ENCODE measurements at regions of chr12 and their contacts with region 1.

Region 1: DNA sequence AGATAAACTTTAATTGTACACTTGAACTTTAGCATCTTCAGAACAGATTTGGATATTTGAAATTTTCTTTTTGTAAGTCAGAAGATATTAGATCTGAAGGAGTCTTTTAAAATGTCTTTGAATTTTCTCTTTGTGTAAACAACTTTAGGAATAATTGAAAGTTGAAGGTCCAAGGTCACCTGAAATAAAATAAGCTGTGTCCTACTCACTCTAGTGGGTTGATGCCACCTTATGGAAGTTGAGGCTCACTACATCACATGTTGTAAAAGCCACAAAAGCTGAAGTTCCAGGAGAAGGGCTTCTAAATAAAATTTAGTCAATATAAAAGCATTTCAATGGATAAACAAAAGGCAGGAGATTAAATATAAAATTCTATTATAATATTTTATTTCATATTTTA is 122.0 kb upstream of the ATXN7L3B start:
- DNase-seq: peak; percentile 46
- H3K4me3 Mint-ChIP-seq: no peak overlapping the region
- H3K27ac Mint-ChIP-seq: no peak overlapping the region
- H3K4me1 Mint-ChIP-seq: peaks cover 7% of the 10 kb centered on the region
- H3K27me3 Mint-ChIP-seq: no peaks in the 10 kb centered on the region
- CTCF ChIP-seq: peak; percentile 54

Region 2: GRCh38 chr12:73935817-73936216 is 479.8 kb before region 1 on chr12:
- CTCF ChIA-PET with region 1: interaction called, 13 read pairs
- POLR2A ChIA-PET with region 1: no interaction called
- intact Hi-C with region 1: loop called (anchors 1 kb)
- DNase-seq: peak; percentile 32
- H3K4me3 Mint-ChIP-seq: no peak overlapping the region
- H3K27ac Mint-ChIP-seq: no peak overlapping the region
- H3K4me1 Mint-ChIP-seq: no peaks in the 10 kb centered on the region
- H3K27me3 Mint-ChIP-seq: no peaks in the 10 kb centered on the region
- CTCF ChIP-seq: peak; percentile 41

Region 3: GRCh38 chr12:74111688-74112360 is 303.8 kb before region 1 on chr12:
- CTCF ChIA-PET with region 1: interaction called, 3 read pairs
- POLR2A ChIA-PET with region 1: no interaction called
- intact Hi-C with region 1: loop called (anchors 1 kb)
- DNase-seq: peak; percentile 63
- H3K4me3 Mint-ChIP-seq: no peak overlapping the region
- H3K27ac Mint-ChIP-seq: no peak overlapping the region
- H3K4me1 Mint-ChIP-seq: peaks cover 7% of the 10 kb centered on the region
- H3K27me3 Mint-ChIP-seq: no peaks in the 10 kb centered on the region
- CTCF ChIP-seq: peak; percentile 37

Region 4: GRCh38 chr12:74401035-74401434 is 14.6 kb before region 1 on chr12:
- CTCF ChIA-PET with region 1: interaction called, 10 read pairs
- POLR2A ChIA-PET with region 1: no interaction called
- intact Hi-C with region 1: no loop called
- DNase-seq: no peak
- H3K4me3 Mint-ChIP-seq: no peak overlapping the region
- H3K27ac Mint-ChIP-seq: no peak overlapping the region
- H3K4me1 Mint-ChIP-seq: no peaks in the 10 kb centered on the region
- H3K27me3 Mint-ChIP-seq: no peaks in the 10 kb centered on the region
- CTCF ChIP-seq: no peak

Region 5: DNA sequence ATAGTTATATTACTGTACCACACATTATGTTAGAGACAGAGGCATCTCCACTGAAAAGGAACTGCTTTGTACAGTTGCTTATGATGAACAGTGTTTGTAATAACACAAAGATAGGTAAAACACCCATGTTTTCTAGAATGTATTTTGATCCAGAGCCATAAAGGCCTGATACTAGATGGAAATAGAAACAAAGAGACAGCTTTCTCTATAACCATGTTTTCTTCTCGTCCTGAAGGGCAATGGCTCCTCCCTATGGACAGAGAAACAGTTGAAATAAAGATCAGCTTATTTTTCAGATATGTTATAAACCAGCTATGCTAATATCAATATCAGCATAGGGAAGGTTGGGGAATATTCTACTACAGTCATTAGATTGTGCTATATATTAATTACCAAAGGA is 231.2 kb after region 1 on chr12:
- CTCF ChIA-PET with region 1: interaction called, 7 read pairs
- POLR2A ChIA-PET with region 1: no interaction called
- intact Hi-C with region 1: loop called (anchors 2 kb)
- DNase-seq: peak; percentile 51
- H3K4me3 Mint-ChIP-seq: no peak overlapping the region
- H3K27ac Mint-ChIP-seq: no peak overlapping the region
- H3K4me1 Mint-ChIP-seq: no peaks in the 10 kb centered on the region
- H3K27me3 Mint-ChIP-seq: no peaks in the 10 kb centered on the region
- CTCF ChIP-seq: peak; percentile 29

Region 6: GRCh38 chr12:74890237-74890599 is 474.6 kb after region 1 on chr12:
- CTCF ChIA-PET with region 1: no interaction called
- POLR2A ChIA-PET with region 1: no interaction called
- intact Hi-C with region 1: no loop called
- DNase-seq: peak; percentile 82
- H3K4me3 Mint-ChIP-seq: peak overlapping the region; percentile 35
- H3K27ac Mint-ChIP-seq: peak overlapping the region; percentile 61
- H3K4me1 Mint-ChIP-seq: peaks cover 17% of the 10 kb centered on the region
- H3K27me3 Mint-ChIP-seq: no peaks in the 10 kb centered on the region
- CTCF ChIP-seq: no peak

Region 7: GRCh38 chr12:74922117-74922516 is 506.5 kb after region 1 on chr12:
- CTCF ChIA-PET with region 1: no interaction called
- POLR2A ChIA-PET with region 1: no interaction called
- intact Hi-C with region 1: no loop called
- DNase-seq: no peak
- H3K4me3 Mint-ChIP-seq: no peak overlapping the region
- H3K27ac Mint-ChIP-seq: no peak overlapping the region
- H3K4me1 Mint-ChIP-seq: no peaks in the 10 kb centered on the region
- H3K27me3 Mint-ChIP-seq: no peaks in the 10 kb centered on the region
- CTCF ChIP-seq: no peak

Measured in MCF 10A (cell line).